Right cardiac atrium (tissue), 5 donors: ENCODE measurements at regions of chrX and their contacts with region 1.

Region 1: GRCh38 chrX:16826207-16826606 is 39.9 kb downstream of the TXLNG start:
- DNase-seq: no peak
- ATAC-seq: peak; percentile 11 to 50
- H3K4me3 ChIP-seq: no peak overlapping the region
- H3K27ac ChIP-seq: no peak overlapping the region
- H3K4me1 ChIP-seq: no peaks in the 10 kb centered on the region
- H3K27me3 ChIP-seq: no peaks in the 10 kb centered on the region

Region 2: DNA sequence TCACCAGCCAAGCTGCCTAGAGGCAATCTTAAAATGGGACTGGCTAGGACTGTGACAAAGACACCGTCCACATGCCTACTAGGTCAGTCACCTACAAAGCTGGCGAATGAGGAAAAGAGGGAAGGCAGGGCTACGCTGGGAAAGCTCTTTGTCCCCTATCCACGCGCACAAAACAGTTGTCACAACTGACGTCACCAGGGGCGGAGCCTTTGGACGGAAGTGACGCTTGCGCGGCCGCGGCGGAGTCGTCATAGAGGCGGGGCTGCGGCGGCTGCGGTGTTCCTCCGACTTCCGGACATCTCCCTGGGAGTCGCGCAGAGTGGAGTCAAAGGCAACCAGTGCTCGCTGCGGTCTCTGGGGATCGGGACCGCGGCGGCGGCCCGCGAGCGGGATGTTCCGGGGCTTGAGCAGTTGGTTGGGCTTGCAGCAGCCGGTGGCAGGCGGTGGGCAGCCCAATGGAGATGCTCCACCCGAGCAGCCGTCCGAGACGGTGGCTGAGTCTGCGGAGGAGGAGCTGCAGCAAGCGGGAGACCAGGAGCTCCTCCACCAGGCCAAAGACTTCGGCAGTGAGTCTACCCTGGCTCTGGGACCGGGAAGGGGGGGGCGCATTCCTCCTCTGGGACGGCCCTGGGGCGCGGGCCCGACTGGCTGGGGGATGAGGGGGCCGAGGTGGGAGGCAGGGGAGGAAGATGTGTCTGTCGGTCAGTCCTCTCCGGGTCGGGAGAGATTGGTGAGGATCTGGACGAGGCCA is 106.7 kb before region 1 on chrX and contains the start of gene SYAP1:
- intact Hi-C with region 1: no loop called
- DNase-seq: peak; percentile 96 to 98 (median 97)
- ATAC-seq: peak; percentile 99
- H3K4me3 ChIP-seq: peak within 1 kb of the TSS; percentile 67
- H3K27ac ChIP-seq: peak within 1 kb of the TSS; percentile 99
- H3K4me1 ChIP-seq: peaks cover 2% of the 10 kb centered on the region
- H3K27me3 ChIP-seq: no peaks in the 10 kb centered on the region
- total RNA-seq, gene SYAP1: 16.3 to 24.9 (median 17.3) TPM

Region 3: GRCh38 chrX:16862829-16863228 is 36.6 kb after region 1 on chrX:
- intact Hi-C with region 1: loop called in 1 of 4 experiments (anchors 5 kb)
- DNase-seq: no peak
- ATAC-seq: no peak
- H3K4me3 ChIP-seq: no peak overlapping the region
- H3K27ac ChIP-seq: no peak overlapping the region
- H3K4me1 ChIP-seq: no peaks in the 10 kb centered on the region
- H3K27me3 ChIP-seq: no peaks in the 10 kb centered on the region